Psoas muscle (tissue), 8 donors: ENCODE measurements at regions of chr1 and their contacts with region 1.

Region 1: GRCh38 chr1:181014477-181015250 is 8.0 kb downstream of the STX6 start:
- DNase-seq: no peak
- ATAC-seq: no peak
- H3K4me3 ChIP-seq: no peak overlapping the region
- H3K27ac ChIP-seq: no peak overlapping the region
- H3K4me1 ChIP-seq: peaks cover 12% of the 10 kb centered on the region
- H3K27me3 ChIP-seq: no peaks in the 10 kb centered on the region
- CTCF ChIP-seq: no peak

Region 2: GRCh38 chr1:180888870-180889269 is 125.8 kb before region 1 on chr1:
- intact Hi-C with region 1: no loop called
- DNase-seq: no peak
- ATAC-seq: no peak
- H3K4me3 ChIP-seq: no peak overlapping the region
- H3K27ac ChIP-seq: no peak overlapping the region
- H3K4me1 ChIP-seq: no peaks in the 10 kb centered on the region
- H3K27me3 ChIP-seq: no peaks in the 10 kb centered on the region
- CTCF ChIP-seq: no peak

Region 3: GRCh38 chr1:180973369-180973768 is 41.3 kb before region 1 on chr1:
- intact Hi-C with region 1: loop called in 1 of 2 experiments (anchors 5 kb)
- DNase-seq: no peak
- ATAC-seq: no peak
- H3K4me3 ChIP-seq: no peak overlapping the region
- H3K27ac ChIP-seq: no peak overlapping the region
- H3K4me1 ChIP-seq: peaks cover 32% of the 10 kb centered on the region
- H3K27me3 ChIP-seq: no peaks in the 10 kb centered on the region
- CTCF ChIP-seq: no peak

Region 4: GRCh38 chr1:181088079-181089016 is 73.7 kb after region 1 on chr1 and contains the start of gene IER5:
- intact Hi-C with region 1: no loop called
- DNase-seq: peak; percentile 95 to 98
- ATAC-seq: peak; percentile 84 to 87 (median 86)
- H3K4me3 ChIP-seq: peak within 1 kb of the TSS; percentile 91
- H3K27ac ChIP-seq: peak within 1 kb of the TSS; percentile 97
- H3K4me1 ChIP-seq: peaks cover 33% of the 10 kb centered on the region
- H3K27me3 ChIP-seq: no peaks in the 10 kb centered on the region
- CTCF ChIP-seq: no peak
- total RNA-seq, gene IER5: 19.9 to 110 (median 48.6) TPM